ENCODE measurements at regions of chr17 and their contacts with region 1.

Region 1: DNA sequence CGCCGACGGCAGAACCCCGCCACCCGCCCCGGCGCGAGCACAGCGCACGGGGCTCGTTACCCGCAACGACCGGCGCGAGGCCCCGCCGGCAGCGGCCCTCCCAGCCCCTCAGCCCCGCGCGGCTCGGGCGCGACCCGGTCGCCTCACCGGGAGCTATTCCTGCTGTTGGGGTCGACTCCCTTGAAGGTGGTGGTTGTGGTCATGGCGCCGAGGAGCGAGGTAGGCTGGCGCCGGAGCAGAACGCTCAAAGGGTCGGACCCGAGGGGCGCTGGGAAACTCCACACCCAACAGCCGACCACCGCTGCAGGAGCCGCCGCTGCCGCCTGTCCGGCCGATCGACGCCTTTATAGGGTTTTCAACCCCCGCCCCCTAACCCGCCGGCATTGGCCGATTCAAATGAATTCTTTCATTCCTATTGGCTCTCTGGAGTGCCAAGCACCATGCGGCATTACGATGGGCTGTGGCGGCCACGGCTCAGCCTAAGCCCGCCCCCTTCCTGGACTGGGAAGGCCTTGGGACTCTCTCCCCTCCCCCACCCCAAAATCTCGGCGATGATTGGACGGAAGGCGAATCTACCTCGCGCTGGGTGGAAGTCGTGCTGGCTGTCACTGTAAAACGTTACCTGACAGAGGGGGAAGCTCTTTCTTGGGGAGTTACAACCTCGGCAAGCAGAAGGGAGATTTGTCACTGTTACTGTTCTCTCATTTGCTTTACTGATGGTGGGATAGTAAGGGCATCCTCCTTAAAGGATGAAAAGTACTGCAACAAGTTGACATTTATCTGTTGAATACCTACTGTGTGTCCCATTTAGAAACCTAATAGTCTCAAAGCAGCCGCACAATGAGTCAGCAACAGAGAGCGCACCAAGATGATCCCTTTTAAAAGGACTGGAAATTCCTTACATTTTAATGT is at the start of gene JPT1:
- DNase-seq: peak; percentile 97 to 98
- H3K4me3 ChIP-seq: peak within 1 kb of the TSS; percentile 81
- H3K27ac ChIP-seq: peak within 1 kb of the TSS; percentile 14; the same call in 1 of the 2 replicates
- H3K4me1 ChIP-seq: peaks cover 42% of the 10 kb centered on the region
- H3K27me3 ChIP-seq: no peaks in the 10 kb centered on the region
- CTCF ChIP-seq: no peak
- total RNA-seq, gene JPT1: 250 and 277 TPM in 2 replicates

Region 2: GRCh38 chr17:74417178-74418045 is 737.0 kb before region 1 on chr17:
- CTCF ChIA-PET with region 1: no interaction called
- POLR2A ChIA-PET with region 1: interaction called, 13 read pairs
- intact Hi-C with region 1: no loop called
- DNase-seq: peak; percentile 37 to 81
- H3K4me3 ChIP-seq: no peak overlapping the region
- H3K27ac ChIP-seq: no peak overlapping the region
- H3K4me1 ChIP-seq: peaks cover 13% of the 10 kb centered on the region
- H3K27me3 ChIP-seq: no peaks in the 10 kb centered on the region
- CTCF ChIP-seq: no peak

Region 3: DNA sequence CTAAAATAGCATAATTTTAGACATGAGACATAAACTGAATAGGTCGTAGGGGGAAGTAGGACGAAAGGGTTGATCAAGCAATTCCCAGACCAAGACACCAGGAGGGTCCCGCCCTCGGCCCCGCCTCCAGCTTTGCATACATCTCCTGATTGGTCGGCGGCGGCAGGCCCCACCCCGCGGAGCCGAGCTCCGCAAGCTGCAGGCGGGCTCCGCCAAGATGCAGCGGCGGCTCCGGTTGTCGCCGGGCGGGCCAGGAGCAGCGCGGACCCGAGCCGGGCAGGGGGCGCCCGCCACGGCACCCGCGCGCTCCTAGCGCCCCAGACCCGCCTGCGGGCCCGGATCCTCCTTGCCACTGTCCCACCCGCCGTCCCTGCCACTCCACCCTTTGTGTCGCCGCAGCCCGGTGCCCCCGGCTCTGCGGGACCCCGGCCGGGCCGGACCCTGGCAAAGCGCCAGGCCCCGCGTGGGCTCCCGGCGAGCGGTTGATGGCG is 167.0 kb before region 1 on chr17 and contains the start of gene CDR2L:
- CTCF ChIA-PET with region 1: no interaction called
- POLR2A ChIA-PET with region 1: interaction called, 10 read pairs
- intact Hi-C with region 1: no loop called
- DNase-seq: peak; percentile 81 to 97
- H3K4me3 ChIP-seq: peak within 1 kb of the TSS; percentile 84
- H3K27ac ChIP-seq: no peak within 1 kb of the TSS
- H3K4me1 ChIP-seq: peaks cover 39% of the 10 kb centered on the region
- H3K27me3 ChIP-seq: no peaks in the 10 kb centered on the region
- CTCF ChIP-seq: no peak
- total RNA-seq, gene CDR2L: 15.1 and 22.8 TPM in 2 replicates

Region 4: DNA sequence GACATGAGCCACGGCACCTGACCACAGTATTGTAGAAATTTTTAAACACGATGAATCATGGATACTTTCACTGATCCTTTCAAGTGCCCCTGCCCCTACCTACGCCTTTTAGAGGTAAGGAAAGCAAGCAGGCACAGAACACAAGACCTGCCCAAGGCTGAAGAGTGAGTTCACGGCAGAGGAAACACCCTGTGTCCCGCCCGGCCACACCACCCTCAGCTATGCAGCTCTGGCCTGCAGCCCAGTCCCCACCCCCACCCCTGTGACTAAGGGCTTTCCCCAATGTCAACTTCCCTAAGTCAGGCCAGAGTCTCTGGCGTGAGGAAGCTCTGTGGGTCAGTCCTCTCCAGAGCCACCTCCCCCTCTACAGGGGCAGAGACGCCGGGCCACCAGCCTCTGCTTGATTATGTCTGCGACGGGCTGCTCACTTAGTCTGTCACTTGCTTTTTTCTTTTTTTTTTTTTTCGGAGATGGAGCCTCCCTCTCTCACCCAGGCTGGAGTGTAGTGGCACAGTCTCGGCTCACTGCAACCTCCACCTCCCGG is 58.3 kb before region 1 on chr17:
- CTCF ChIA-PET with region 1: no interaction called
- POLR2A ChIA-PET with region 1: no interaction called
- intact Hi-C with region 1: loop called (anchors 1 kb)
- DNase-seq: peak; percentile 89 to 99
- H3K4me3 ChIP-seq: no peak overlapping the region; the same call in 1 of the 2 replicates
- H3K27ac ChIP-seq: peak overlapping the region; percentile 89
- H3K4me1 ChIP-seq: peaks cover 58% of the 10 kb centered on the region
- H3K27me3 ChIP-seq: no peaks in the 10 kb centered on the region
- CTCF ChIP-seq: no peak

Region 5: DNA sequence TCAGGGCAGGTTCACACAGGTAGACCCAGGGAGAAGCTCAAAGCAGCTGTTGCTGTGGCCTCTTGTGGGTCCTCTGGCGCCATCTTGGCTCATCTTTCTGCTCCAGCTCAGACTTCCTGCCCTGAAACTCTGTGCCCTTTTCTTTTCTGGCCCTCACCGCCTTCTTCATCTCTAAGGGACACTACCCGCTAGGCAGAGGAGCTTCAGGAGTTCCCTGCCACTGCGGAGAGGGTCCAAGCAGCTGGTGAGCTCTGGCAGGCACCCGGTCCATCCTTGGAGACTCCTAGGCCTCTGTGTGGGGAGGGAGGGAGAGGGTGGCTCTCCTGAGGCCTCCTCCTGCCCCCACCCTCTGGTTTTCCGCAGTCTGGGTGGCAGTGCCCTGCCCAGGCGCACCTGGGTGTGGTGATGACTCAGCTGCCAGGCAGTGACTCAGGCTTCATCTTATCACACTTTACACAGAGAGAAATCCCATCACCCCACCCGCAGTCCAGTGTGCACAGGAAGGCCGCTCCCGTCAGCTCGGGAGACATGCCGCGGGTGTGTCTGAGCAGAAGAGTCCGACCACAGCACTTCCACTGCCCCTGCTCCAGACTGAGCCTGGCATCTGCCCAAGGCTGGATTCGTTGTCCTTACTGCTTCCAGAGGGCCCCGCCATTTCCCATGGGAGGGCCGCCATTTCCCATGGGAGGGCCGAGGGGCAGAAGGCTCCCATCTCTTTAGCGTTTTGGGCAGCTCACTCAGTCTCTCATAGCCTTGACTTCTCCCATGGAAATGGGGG is 30.2 kb before region 1 on chr17:
- CTCF ChIA-PET with region 1: interaction called, 12 read pairs
- POLR2A ChIA-PET with region 1: interaction called, 12 read pairs
- intact Hi-C with region 1: loop called (anchors 1 kb)
- DNase-seq: peak; percentile 97
- H3K4me3 ChIP-seq: peak overlapping the region; percentile 45; the same call in 1 of the 2 replicates
- H3K27ac ChIP-seq: peak overlapping the region; percentile 93
- H3K4me1 ChIP-seq: peaks cover 39% of the 10 kb centered on the region
- H3K27me3 ChIP-seq: no peaks in the 10 kb centered on the region
- CTCF ChIP-seq: no peak; the same call in 1 of the 2 replicates

Region 6: GRCh38 chr17:75131280-75132017 is 23.0 kb before region 1 on chr17 and contains the start of gene NT5C:
- CTCF ChIA-PET with region 1: interaction called, 6 read pairs
- POLR2A ChIA-PET with region 1: interaction called, 12 read pairs
- intact Hi-C with region 1: loop called (anchors 2 kb)
- DNase-seq: peak; percentile 62 to 71
- H3K4me3 ChIP-seq: peak within 1 kb of the TSS; percentile 95
- H3K27ac ChIP-seq: peak within 1 kb of the TSS; percentile 72
- H3K4me1 ChIP-seq: peaks cover 20% of the 10 kb centered on the region
- H3K27me3 ChIP-seq: no peaks in the 10 kb centered on the region
- CTCF ChIP-seq: peak; percentile 65
- total RNA-seq, gene NT5C: 38.6 and 52.3 TPM in 2 replicates

Region 7: DNA sequence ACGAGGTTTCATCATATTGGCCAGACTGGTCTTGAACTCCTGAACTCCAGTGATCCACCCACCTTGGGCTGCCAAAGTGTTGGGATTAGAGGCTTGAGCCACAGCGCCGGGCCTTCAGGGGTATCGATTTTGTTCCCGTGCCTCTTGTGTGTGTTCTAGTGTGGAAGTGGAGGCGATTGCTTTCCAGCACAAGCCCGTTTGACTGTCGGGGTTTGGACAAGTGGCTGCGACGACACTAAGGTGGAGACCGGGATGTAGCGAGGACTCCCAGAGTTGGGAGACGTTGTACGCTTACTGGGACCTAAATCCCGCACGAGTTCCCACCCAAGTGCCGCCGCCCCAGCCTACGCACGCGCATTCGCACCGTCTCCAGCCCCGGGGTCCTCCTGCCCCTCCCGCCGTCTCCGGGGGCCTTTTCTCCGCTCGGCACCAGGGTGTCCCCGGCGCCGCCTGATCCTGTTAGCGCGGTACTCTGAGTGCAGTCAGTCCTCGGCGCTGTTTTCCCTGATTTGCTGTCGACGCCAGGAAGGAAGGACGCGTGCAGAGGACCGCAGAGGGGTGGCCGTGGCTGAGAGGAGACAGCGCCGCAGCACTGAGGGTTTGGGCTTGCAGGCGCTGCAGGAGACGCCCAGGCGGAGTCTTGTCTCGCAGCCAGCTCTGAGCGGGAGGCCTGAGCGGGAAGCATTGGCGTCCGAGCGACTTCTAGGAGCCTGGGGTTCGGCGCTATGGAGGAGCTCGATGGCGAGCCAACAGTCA is 50.8 kb after region 1 on chr17 and contains the start of gene NUP85:
- CTCF ChIA-PET with region 1: interaction called, 12 read pairs
- POLR2A ChIA-PET with region 1: interaction called, 10 read pairs
- intact Hi-C with region 1: no loop called
- DNase-seq: peak; percentile 90 to 96
- H3K4me3 ChIP-seq: peak within 1 kb of the TSS; percentile 93
- H3K27ac ChIP-seq: peak within 1 kb of the TSS; percentile 92
- H3K4me1 ChIP-seq: peaks cover 14% of the 10 kb centered on the region
- H3K27me3 ChIP-seq: no peaks in the 10 kb centered on the region
- CTCF ChIP-seq: no peak
- total RNA-seq, gene NUP85: 64.2 and 73.1 TPM in 2 replicates

Region 8: DNA sequence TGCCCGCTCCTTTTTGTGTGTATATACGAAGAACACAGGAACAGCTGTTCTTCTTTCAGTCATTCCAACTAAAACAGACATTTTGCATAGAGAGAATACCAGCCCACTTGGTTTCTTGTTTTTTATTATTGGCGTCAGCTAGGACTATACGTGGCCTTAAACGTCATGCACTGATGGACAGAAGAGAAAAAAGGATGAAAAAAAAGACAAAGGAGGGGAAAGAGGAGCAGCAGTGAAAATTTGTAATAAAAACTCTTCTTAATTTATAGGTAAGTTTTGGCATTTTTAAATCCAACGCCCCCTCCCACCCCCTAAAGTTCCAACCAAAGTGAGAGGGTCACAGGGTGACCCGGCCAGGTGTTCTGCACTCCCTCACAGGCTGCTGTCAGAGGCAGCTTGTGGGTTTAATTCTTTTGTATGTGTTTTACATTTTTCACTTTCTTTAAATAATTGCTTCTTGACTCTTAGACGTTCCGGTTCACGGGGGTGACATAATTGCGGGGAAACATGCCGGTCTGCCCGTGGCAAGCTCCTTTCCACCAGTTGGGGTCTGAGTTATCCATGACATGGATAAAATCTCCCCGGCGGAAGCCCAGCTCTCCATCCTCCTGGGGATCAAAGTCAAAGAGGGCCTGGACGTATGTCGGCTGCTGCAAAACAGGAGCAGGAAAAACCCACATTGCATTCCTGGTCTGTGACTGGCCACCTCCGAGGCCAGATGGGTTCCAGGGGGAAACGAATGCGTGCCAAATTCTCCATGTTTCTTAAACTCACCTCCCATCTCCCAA is 165.6 kb after region 1 on chr17:
- CTCF ChIA-PET with region 1: no interaction called
- POLR2A ChIA-PET with region 1: no interaction called
- intact Hi-C with region 1: no loop called
- DNase-seq: no peak
- H3K4me3 ChIP-seq: no peak overlapping the region
- H3K27ac ChIP-seq: no peak overlapping the region
- H3K4me1 ChIP-seq: no peaks in the 10 kb centered on the region
- H3K27me3 ChIP-seq: no peaks in the 10 kb centered on the region
- CTCF ChIP-seq: no peak